CD8-positive, alpha-beta T cell (primary cell): ENCODE measurements at regions of chr9 and their contacts with region 1.

Region 1: DNA sequence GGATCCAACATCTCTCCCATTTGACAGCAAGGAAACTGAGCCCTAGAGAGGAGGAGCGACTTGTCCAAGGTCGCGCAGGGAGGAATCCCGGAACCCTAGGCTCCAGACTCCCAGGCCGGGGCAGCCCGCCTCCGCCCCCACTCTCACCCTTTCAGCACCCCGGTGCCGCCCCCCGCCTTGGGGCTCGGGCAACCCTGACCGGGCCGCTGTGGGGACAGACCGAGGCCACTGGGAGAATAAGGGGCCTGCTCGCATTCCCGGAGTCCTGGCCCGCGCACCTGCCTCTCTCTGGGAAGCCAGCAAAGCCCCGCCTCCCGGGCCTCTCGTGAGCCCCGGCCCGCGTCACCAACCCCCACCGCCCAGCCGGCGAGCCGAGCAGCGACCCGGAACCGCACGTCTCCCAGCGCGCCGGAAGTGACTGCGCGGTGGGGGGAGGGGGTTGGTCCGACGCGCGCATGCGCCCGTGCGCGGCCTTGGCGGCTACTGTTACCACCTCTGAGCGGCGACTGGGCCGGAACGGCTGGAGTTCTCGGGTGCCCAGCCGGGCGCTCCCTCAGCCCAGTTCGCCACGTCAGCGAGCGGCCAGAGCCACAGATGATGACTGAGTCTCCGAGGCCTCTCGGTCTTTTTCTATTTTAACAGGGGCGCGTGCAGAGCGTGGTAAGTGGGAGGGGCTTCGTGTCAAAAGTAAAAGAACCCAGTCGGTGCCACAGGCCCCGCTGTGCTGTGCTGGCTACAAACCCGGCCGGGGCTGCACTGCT is at the start of gene GOLGA1:
- DNase-seq: peak; percentile 85 to 96 (median 92)
- ATAC-seq: peak; percentile 86
- H3K4me3 ChIP-seq: peak within 1 kb of the TSS; percentile 63 to 97
- H3K4me3 Mint-ChIP-seq: peak within 1 kb of the TSS; percentile 91
- H3K27ac ChIP-seq: peak within 1 kb of the TSS; percentile 93 to 97
- H3K27ac Mint-ChIP-seq: peak within 1 kb of the TSS; percentile 96
- H3K4me1 ChIP-seq: peaks cover 15% of the 10 kb centered on the region
- H3K4me1 Mint-ChIP-seq: peaks cover 31% of the 10 kb centered on the region
- H3K27me3 ChIP-seq: no peaks in the 10 kb centered on the region
- H3K27me3 Mint-ChIP-seq: no peaks in the 10 kb centered on the region
- CTCF ChIP-seq: no peak
- total RNA-seq, gene GOLGA1: 12.6 to 13.6 TPM

Region 2: DNA sequence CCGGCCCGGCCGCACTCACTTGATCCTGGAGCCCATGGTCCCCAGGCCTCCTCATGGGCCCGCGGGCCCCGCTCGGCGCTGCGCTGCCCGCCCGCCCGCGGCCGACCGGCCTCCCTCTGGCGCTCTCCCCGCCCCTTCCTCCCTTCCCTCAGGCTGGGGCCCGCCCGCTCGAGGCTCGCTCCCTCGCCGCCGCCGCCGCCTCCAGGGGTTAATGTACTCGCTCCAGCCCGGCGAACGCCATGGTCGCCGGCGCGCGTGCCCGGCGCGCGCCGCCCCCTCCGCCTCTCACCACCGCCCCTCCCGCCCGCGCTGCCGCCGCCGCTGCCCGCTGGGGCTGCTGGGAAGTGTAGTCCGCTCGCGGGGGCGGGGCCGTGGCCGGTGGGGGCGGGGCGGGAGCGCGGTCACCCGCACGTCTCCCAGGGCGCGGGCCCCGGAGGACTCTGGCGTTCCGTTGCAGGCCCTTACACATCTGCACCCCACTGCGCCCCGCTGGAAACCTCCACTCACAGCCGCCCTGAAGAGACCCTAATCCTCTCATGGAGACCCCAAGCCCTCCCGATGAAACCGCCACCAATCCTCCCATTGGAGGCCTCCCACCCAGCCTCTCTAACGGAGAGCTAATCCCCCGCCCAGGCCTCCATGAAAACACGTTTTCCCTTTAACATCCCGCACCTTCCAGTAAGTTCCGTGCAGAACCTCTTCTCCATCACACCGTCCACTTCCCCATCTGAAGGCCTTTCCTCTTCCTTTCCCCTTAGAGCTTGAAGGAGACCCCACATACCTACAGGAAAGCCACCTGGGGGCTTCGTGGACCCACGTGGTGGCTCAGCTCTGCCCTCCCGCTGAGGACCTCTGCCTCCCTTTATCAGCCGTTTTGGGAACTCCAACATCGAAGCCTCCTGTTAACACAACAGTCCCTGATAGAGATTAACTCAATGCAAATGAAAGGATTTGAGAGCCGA is 1010.7 kb before region 1 on chr9 and contains the start of gene DENND1A:
- CTCF ChIA-PET with region 1: no interaction called
- POLR2A ChIA-PET with region 1: no interaction called
- intact Hi-C with region 1: loop called in 1 of 2 experiments (anchors 2 kb)
- DNase-seq: peak; percentile 74 to 92 (median 85)
- ATAC-seq: peak; percentile 94
- H3K4me3 ChIP-seq: peak within 1 kb of the TSS; percentile 58 to 66
- H3K4me3 Mint-ChIP-seq: peak within 1 kb of the TSS; percentile 90
- H3K27ac ChIP-seq: no peak within 1 kb of the TSS
- H3K27ac Mint-ChIP-seq: peak within 1 kb of the TSS; percentile 75
- H3K4me1 ChIP-seq: peaks cover 22% of the 10 kb centered on the region
- H3K4me1 Mint-ChIP-seq: peaks cover 42% of the 10 kb centered on the region
- H3K27me3 ChIP-seq: no peaks in the 10 kb centered on the region
- H3K27me3 Mint-ChIP-seq: no peaks in the 10 kb centered on the region
- CTCF ChIP-seq: no peak
- total RNA-seq, gene DENND1A: 17.5 to 18.7 TPM

Region 3: GRCh38 chr9:124861342-124862229 is 79.3 kb before region 1 on chr9 and contains the starts of genes ARPC5L and RPL35:
- CTCF ChIA-PET with region 1: no interaction called
- POLR2A ChIA-PET with region 1: interaction called, 5 read pairs
- intact Hi-C with region 1: loop called (anchors 1 kb)
- DNase-seq: peak; percentile 90 to 97 (median 95)
- ATAC-seq: peak; percentile 95
- H3K4me3 ChIP-seq: peak within 1 kb of the TSS; percentile 67 to 90
- H3K4me3 Mint-ChIP-seq: peak within 1 kb of the TSS; percentile 97
- H3K27ac ChIP-seq: peak within 1 kb of the TSS; percentile 88 to 93
- H3K27ac Mint-ChIP-seq: peak within 1 kb of the TSS; percentile 98
- H3K4me1 ChIP-seq: peaks cover 16% of the 10 kb centered on the region
- H3K4me1 Mint-ChIP-seq: peaks cover 31% of the 10 kb centered on the region
- H3K27me3 ChIP-seq: no peaks in the 10 kb centered on the region
- H3K27me3 Mint-ChIP-seq: no peaks in the 10 kb centered on the region
- CTCF ChIP-seq: no peak
- total RNA-seq, gene ARPC5L: 43.2 to 45.5 TPM
- total RNA-seq, gene RPL35: 1,798 to 1,805 TPM

Region 4: DNA sequence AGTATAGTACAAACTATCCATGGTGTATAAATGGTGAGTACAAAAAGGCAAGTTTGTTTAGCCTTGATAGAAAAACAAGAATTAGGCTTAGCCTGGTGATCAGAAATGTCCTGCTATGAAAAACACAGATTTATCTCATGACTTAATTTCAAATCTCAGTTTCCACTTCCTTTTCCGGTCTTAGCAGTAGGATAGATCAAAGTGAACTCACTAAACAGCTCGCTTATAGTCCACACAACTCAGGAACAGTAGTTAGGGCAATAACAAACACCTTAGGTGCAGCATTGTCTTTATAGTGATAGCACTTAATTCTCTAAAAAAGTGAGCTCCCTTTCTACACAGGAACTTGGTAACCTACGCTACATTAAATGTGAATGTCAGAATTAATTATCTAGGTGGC is 11.4 kb before region 1 on chr9:
- CTCF ChIA-PET with region 1: no interaction called
- POLR2A ChIA-PET with region 1: no interaction called
- intact Hi-C with region 1: no loop called
- DNase-seq: no peak
- ATAC-seq: no peak
- H3K4me3 ChIP-seq: no peak overlapping the region
- H3K4me3 Mint-ChIP-seq: no peak overlapping the region
- H3K27ac ChIP-seq: no peak overlapping the region
- H3K27ac Mint-ChIP-seq: no peak overlapping the region
- H3K4me1 ChIP-seq: no peaks in the 10 kb centered on the region
- H3K4me1 Mint-ChIP-seq: peaks cover 6% of the 10 kb centered on the region
- H3K27me3 ChIP-seq: no peaks in the 10 kb centered on the region
- H3K27me3 Mint-ChIP-seq: no peaks in the 10 kb centered on the region
- CTCF ChIP-seq: no peak

Region 5: GRCh38 chr9:124964604-124965003 is 23.7 kb after region 1 on chr9:
- CTCF ChIA-PET with region 1: no interaction called
- POLR2A ChIA-PET with region 1: interaction called, 39 read pairs
- intact Hi-C with region 1: loop called (anchors 1 kb)
- DNase-seq: no peak
- ATAC-seq: no peak
- H3K4me3 ChIP-seq: no peak overlapping the region
- H3K4me3 Mint-ChIP-seq: peak overlapping the region; percentile 12
- H3K27ac ChIP-seq: peak overlapping the region; percentile 62 to 75
- H3K27ac Mint-ChIP-seq: peak overlapping the region; percentile 96
- H3K4me1 ChIP-seq: peaks cover 34% of the 10 kb centered on the region
- H3K4me1 Mint-ChIP-seq: peaks cover 28% of the 10 kb centered on the region
- H3K27me3 ChIP-seq: no peaks in the 10 kb centered on the region
- H3K27me3 Mint-ChIP-seq: no peaks in the 10 kb centered on the region
- CTCF ChIP-seq: no peak

Region 6: GRCh38 chr9:125143375-125144090 is 202.7 kb after region 1 on chr9 and contains the start of gene SCAI:
- CTCF ChIA-PET with region 1: no interaction called
- POLR2A ChIA-PET with region 1: interaction called, 8 read pairs
- intact Hi-C with region 1: loop called (anchors 1 kb)
- DNase-seq: peak; percentile 97 to 99 (median 98)
- ATAC-seq: peak; percentile 98
- H3K4me3 ChIP-seq: peak within 1 kb of the TSS; percentile 49 to 51
- H3K4me3 Mint-ChIP-seq: peak within 1 kb of the TSS; percentile 93
- H3K27ac ChIP-seq: no peak within 1 kb of the TSS
- H3K27ac Mint-ChIP-seq: peak within 1 kb of the TSS; percentile 76
- H3K4me1 ChIP-seq: peaks cover 11% of the 10 kb centered on the region
- H3K4me1 Mint-ChIP-seq: peaks cover 26% of the 10 kb centered on the region
- H3K27me3 ChIP-seq: no peaks in the 10 kb centered on the region
- H3K27me3 Mint-ChIP-seq: no peaks in the 10 kb centered on the region
- CTCF ChIP-seq: peak; percentile 92
- total RNA-seq, gene SCAI: 5.7 to 6.3 TPM

Region 7: DNA sequence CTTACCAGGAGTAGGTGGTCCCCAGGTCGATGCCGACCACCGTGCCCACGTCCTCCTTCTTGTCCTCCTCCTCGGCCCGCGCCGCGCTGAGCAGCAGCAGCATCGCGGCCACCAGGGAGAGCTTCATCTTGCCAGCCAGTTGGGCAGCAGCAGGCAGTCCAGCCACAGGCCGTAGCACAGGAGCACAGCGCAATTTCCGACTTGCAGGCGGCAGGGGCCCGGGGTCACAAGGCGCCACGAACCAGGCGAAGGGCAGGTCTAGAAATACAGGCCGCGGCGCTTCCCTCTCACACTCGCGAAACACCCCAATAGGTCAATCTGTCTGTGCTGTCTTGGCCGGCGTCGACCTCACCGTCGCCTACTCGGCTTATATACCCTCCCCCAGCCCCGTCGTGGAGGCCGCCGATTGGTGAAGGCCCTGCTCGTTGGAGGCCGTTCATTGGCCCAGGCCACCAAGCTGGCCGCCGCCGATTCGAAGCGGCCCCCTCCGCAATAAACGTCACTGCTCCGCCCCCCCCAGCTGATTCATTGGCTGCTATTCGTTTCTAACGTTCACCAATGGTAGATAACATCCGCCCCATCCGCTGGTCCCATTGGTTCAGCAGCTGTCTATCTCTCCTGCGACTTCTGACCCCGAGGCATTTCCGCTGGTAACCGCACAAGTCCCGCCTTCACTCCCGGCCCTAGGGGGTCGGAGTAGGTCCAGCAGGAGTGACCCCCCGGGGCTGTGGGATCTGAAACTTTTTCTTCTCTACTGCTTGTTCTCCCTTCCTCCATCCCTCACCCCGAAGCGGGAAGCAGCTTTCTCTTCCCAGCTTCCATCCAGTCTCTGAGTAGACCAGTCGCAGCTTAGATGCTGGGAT is 300.4 kb after region 1 on chr9 and contains the start of gene HSPA5:
- CTCF ChIA-PET with region 1: no interaction called
- POLR2A ChIA-PET with region 1: interaction called, 8 read pairs
- intact Hi-C with region 1: loop called in 1 of 2 experiments (anchors 2 kb)
- DNase-seq: peak; percentile 98 to 100 (median 99)
- ATAC-seq: peak; percentile 90
- H3K4me3 ChIP-seq: peak within 1 kb of the TSS; percentile 91 to 93
- H3K4me3 Mint-ChIP-seq: peak within 1 kb of the TSS; percentile 97
- H3K27ac ChIP-seq: peak within 1 kb of the TSS; percentile 97 to 99
- H3K27ac Mint-ChIP-seq: peak within 1 kb of the TSS; percentile 99
- H3K4me1 ChIP-seq: peaks cover 46% of the 10 kb centered on the region
- H3K4me1 Mint-ChIP-seq: peaks cover 46% of the 10 kb centered on the region
- H3K27me3 ChIP-seq: no peaks in the 10 kb centered on the region
- H3K27me3 Mint-ChIP-seq: no peaks in the 10 kb centered on the region
- CTCF ChIP-seq: no peak
- total RNA-seq, gene HSPA5: 354 to 372 TPM

Region 8: GRCh38 chr9:125746017-125746773 is 805.3 kb after region 1 on chr9:
- CTCF ChIA-PET with region 1: no interaction called
- POLR2A ChIA-PET with region 1: no interaction called
- intact Hi-C with region 1: loop called in 1 of 2 experiments (anchors 2 kb)
- DNase-seq: peak; percentile 74 to 96 (median 92)
- ATAC-seq: peak; percentile 85
- H3K4me3 ChIP-seq: peak overlapping the region; percentile 74 to 91
- H3K4me3 Mint-ChIP-seq: peak overlapping the region; percentile 98
- H3K27ac ChIP-seq: peak overlapping the region; percentile 7 to 56
- H3K27ac Mint-ChIP-seq: peak overlapping the region; percentile 88
- H3K4me1 ChIP-seq: peaks cover 11% of the 10 kb centered on the region
- H3K4me1 Mint-ChIP-seq: peaks cover 29% of the 10 kb centered on the region
- H3K27me3 ChIP-seq: no peaks in the 10 kb centered on the region
- H3K27me3 Mint-ChIP-seq: no peaks in the 10 kb centered on the region
- CTCF ChIP-seq: no peak